Astrocyte of the cerebellum (primary cell): ENCODE measurements at regions of chr17 and their contacts with region 1.

Region 1: GRCh38 chr17:37261286-37261685 is 114.5 kb upstream of the C17orf78 start:
- DNase-seq: peak; percentile 43
- H3K4me3 ChIP-seq: no peak overlapping the region
- CTCF ChIP-seq: no peak

Region 2: GRCh38 chr17:37344519-37344918 is 83.2 kb after region 1 on chr17:
- in situ Hi-C with region 1: loop called (anchors 5 kb)
- DNase-seq: no peak
- H3K4me3 ChIP-seq: no peak overlapping the region
- CTCF ChIP-seq: no peak